ENCODE measurements at regions of chrX and their contacts with region 1.

Region 1: GRCh38 chrX:40266490-40267333 is 169.0 kb upstream of the BCOR start:
- DNase-seq: peak; percentile 11 to 35
- ATAC-seq: peak; percentile 78 to 82
- H3K4me3 ChIP-seq: peak overlapping the region; percentile 49 to 59 (median 52)
- H3K27ac ChIP-seq: peak overlapping the region; percentile 6 to 60 (median 54)
- H3K4me1 ChIP-seq: no peaks in the 10 kb centered on the region
- H3K27me3 ChIP-seq: no peaks in the 10 kb centered on the region
- CTCF ChIP-seq: peak; percentile 36 to 68 (median 65)
- POLR2A ChIP-seq: no peak

Region 2: GRCh38 chrX:39827951-39828350 is 438.8 kb before region 1 on chrX:
- in situ Hi-C with region 1: loop called in 1 of 4 experiments (anchors 25 kb)
- intact Hi-C with region 1: no loop called
- DNase-seq: no peak
- ATAC-seq: no peak
- H3K4me3 ChIP-seq: no peak overlapping the region
- H3K27ac ChIP-seq: no peak overlapping the region
- H3K4me1 ChIP-seq: peaks cover 3% of the 10 kb centered on the region in 2 donors
- H3K27me3 ChIP-seq: no peaks in the 10 kb centered on the region
- CTCF ChIP-seq: no peak
- POLR2A ChIP-seq: no peak

Region 3: DNA sequence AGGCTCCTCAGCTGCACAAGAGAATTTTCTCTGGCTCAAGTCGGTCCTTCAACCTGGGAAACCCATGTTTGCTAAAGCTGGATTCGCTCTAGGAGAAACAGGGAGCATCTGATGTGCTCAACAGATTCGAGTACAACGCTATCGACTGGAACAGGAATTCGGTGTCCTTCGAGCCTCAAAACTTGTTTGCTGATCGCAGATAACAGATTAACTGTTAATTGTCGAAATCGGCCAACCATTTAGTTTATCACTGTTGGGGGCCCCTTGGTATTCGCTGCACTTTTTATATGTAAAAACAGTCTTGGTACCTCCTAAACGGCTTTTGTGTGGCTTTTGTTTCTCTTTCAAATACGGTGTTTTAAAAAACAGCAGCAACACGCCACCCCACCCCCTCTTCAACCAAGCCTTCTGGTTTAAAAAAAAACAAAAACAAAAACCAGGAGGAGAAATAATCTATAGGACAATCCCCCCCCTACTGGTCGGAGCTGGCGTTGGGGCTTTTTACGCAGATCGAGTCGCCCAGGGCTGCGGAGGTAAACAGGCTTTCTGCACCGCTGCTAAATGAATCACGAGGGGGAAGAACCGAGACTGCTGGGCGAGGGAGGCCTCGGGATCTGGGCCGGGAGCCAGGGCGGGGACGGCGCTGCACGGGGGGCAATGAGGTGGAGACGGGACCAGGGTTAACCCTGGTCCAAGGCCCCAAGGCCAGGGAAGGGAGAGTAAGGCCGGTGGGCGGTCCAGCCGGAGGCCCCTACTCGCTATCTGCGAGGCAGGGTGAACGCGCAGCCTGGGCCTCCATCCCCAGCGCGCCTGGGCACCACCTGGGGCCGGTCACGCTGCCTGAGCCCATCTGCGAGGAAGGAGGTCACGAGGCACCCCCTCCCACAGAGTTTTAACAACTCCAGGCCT is 97.3 kb before region 1 on chrX:
- in situ Hi-C with region 1: no loop called
- intact Hi-C with region 1: loop called (anchors 10 kb)
- DNase-seq: no peak
- ATAC-seq: no peak
- H3K4me3 ChIP-seq: peak overlapping the region in 1 of 4 donors; percentile 2
- H3K27ac ChIP-seq: no peak overlapping the region
- H3K4me1 ChIP-seq: peaks cover 2 to 19% of the 10 kb centered on the region in 2 donors
- H3K27me3 ChIP-seq: peaks cover 0 to 55% (median 29%) of the 10 kb centered on the region in 3 donors
- CTCF ChIP-seq: peak in 1 of 5 experiments; percentile 31
- POLR2A ChIP-seq: no peak

Region 4: GRCh38 chrX:40291553-40291952 is 24.8 kb after region 1 on chrX:
- in situ Hi-C with region 1: no loop called
- intact Hi-C with region 1: no loop called
- DNase-seq: no peak
- ATAC-seq: no peak
- H3K4me3 ChIP-seq: no peak overlapping the region
- H3K27ac ChIP-seq: no peak overlapping the region
- H3K4me1 ChIP-seq: no peaks in the 10 kb centered on the region
- H3K27me3 ChIP-seq: no peaks in the 10 kb centered on the region
- CTCF ChIP-seq: no peak
- POLR2A ChIP-seq: no peak